Naive thymus-derived CD4-positive, alpha-beta T cell (primary cell): ENCODE measurements at regions of chr16 and their contacts with region 1.

Region 1: DNA sequence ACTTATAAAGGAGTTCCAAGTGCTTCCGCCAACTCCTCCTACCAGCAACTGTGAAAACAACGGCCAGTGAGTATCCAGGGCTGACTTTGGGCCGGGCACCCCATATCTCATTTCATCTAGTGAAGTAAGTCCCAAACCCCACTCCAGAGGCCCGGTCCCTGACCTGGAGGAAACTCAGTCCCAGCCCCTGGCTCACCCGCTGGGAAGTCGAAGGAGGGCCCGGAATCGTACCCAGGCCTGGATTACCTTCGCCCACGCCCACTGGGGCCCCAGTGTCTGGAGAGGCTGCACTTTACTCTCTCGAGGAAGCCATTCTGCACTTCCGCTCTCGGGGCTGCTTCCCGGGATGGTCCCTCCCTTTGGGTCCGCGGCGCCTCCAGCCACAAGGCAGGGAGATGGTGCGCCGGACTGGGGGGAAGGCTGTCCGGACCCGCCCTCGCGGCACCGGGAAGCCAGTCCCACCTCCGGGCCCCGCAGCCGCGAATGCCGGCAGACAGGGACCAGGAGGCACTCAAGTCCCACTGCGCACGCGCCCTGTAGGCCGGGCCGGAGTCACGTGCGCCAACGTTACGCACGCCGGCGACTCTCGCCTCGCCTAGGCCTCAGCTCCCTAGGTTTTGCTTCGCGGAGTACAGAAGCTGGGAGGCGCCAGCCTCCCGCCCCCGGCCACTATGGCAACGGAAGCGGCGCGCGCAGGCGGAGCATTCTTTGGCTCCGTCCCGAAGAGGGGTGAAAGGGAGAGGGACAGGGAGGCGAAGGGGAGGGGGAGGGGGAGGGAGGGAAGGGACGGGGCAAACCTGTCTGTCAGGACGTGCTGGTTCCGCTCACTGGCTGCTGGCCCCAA is at the start of gene CMTR2:
- DNase-seq: peak; percentile 77 to 92 (median 87)
- ATAC-seq: peak; percentile 97
- H3K4me3 ChIP-seq: peak within 1 kb of the TSS; percentile 87
- H3K4me3 Mint-ChIP-seq: peak within 1 kb of the TSS; percentile 81 to 93 (median 89)
- H3K27ac ChIP-seq: peak within 1 kb of the TSS; percentile 82
- H3K27ac Mint-ChIP-seq: peak within 1 kb of the TSS; percentile 75 to 95 (median 92)
- H3K4me1 ChIP-seq: peaks cover 5 to 14% of the 10 kb centered on the region in 2 donors
- H3K4me1 Mint-ChIP-seq: peaks cover 21 to 36% (median 30%) of the 10 kb centered on the region in 7 donors
- H3K27me3 ChIP-seq: no peaks in the 10 kb centered on the region
- H3K27me3 Mint-ChIP-seq: peaks cover 13 to 26% (median 19%) of the 10 kb centered on the region in 5 donors
- total RNA-seq, gene CMTR2: 8.0 to 28.2 (median 22.3) TPM

Region 2: GRCh38 chr16:70430667-70431536 is 858.2 kb before region 1 on chr16:
- CTCF ChIA-PET with region 1: no interaction called
- POLR2A ChIA-PET with region 1: no interaction called
- intact Hi-C with region 1: loop called in 1 of 2 experiments (anchors 5 kb)
- DNase-seq: peak in 8 of 9 donors; percentile 49 to 85 (median 64)
- ATAC-seq: peak; percentile 89
- H3K4me3 ChIP-seq: peak overlapping the region; percentile 29
- H3K4me3 Mint-ChIP-seq: peak overlapping the region; percentile 60 to 86 (median 78)
- H3K27ac ChIP-seq: peak overlapping the region; percentile 91
- H3K27ac Mint-ChIP-seq: peak overlapping the region; percentile 84 to 98 (median 93)
- H3K4me1 ChIP-seq: peaks cover 20 to 32% of the 10 kb centered on the region in 2 donors
- H3K4me1 Mint-ChIP-seq: peaks cover 47 to 78% (median 70%) of the 10 kb centered on the region in 7 donors
- H3K27me3 ChIP-seq: no peaks in the 10 kb centered on the region
- H3K27me3 Mint-ChIP-seq: no peaks in the 10 kb centered on the region

Region 3: GRCh38 chr16:70800781-70801530 is 488.2 kb before region 1 on chr16 and contains the start of gene VAC14:
- CTCF ChIA-PET with region 1: no interaction called
- POLR2A ChIA-PET with region 1: no interaction called
- intact Hi-C with region 1: loop called (anchors 1 kb)
- DNase-seq: peak; percentile 96 to 99 (median 97)
- ATAC-seq: peak; percentile 99
- H3K4me3 ChIP-seq: peak within 1 kb of the TSS; percentile 90
- H3K4me3 Mint-ChIP-seq: peak within 1 kb of the TSS; percentile 90 to 98 (median 94)
- H3K27ac ChIP-seq: peak within 1 kb of the TSS; percentile 78
- H3K27ac Mint-ChIP-seq: peak within 1 kb of the TSS; percentile 84 to 95 (median 92)
- H3K4me1 ChIP-seq: peaks cover 11 to 17% of the 10 kb centered on the region in 2 donors
- H3K4me1 Mint-ChIP-seq: peaks cover 19 to 49% (median 44%) of the 10 kb centered on the region in 7 donors
- H3K27me3 ChIP-seq: no peaks in the 10 kb centered on the region
- H3K27me3 Mint-ChIP-seq: peaks cover 0 to 15% (median 0%) of the 10 kb centered on the region in 5 donors
- total RNA-seq, gene VAC14: 36.7 to 47.1 (median 45.9) TPM

Region 4: GRCh38 chr16:71461686-71462648 is 172.9 kb after region 1 on chr16 and contains the start of gene ZNF23:
- CTCF ChIA-PET with region 1: no interaction called
- POLR2A ChIA-PET with region 1: no interaction called
- intact Hi-C with region 1: loop called (anchors 5 kb)
- DNase-seq: peak; percentile 53 to 84 (median 72)
- ATAC-seq: peak; percentile 99
- H3K4me3 ChIP-seq: peak within 1 kb of the TSS; percentile 92
- H3K4me3 Mint-ChIP-seq: peak within 1 kb of the TSS; percentile 88 to 97 (median 94)
- H3K27ac ChIP-seq: peak within 1 kb of the TSS; percentile 87
- H3K27ac Mint-ChIP-seq: peak within 1 kb of the TSS; percentile 85 to 98 (median 92)
- H3K4me1 ChIP-seq: peaks cover 4 to 6% of the 10 kb centered on the region in 2 donors
- H3K4me1 Mint-ChIP-seq: peaks cover 13 to 39% (median 27%) of the 10 kb centered on the region in 7 donors
- H3K27me3 ChIP-seq: no peaks in the 10 kb centered on the region
- H3K27me3 Mint-ChIP-seq: no peaks in the 10 kb centered on the region
- total RNA-seq, gene ZNF23: 6.5 to 16.0 (median 8.8) TPM

Region 5: DNA sequence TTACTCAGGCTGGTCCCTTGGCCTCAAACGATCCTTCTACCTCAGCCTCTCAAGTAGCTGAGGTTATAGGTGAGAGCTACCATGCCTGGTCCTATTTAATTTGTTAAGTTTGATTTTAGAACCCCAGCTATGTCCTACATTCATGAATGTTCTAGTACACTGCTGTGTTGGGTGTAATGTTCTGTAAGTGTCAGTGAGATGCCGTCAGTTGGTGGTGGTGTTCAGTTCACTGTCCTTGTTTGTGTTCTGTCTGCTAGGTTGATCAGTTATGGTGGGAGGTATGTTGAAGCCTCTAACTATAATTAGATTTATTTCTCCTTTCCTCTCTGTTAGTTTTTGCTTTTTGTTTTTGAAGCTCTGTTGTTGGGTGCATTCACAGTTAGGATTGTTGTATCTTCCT is 614.5 kb after region 1 on chr16:
- CTCF ChIA-PET with region 1: no interaction called
- POLR2A ChIA-PET with region 1: no interaction called
- intact Hi-C with region 1: loop called in 1 of 2 experiments (anchors 5 kb)
- DNase-seq: no peak
- ATAC-seq: no peak
- H3K4me3 ChIP-seq: no peak overlapping the region
- H3K4me3 Mint-ChIP-seq: peak overlapping the region in 8 of 10 donors; percentile 12 to 76 (median 50)
- H3K27ac ChIP-seq: no peak overlapping the region
- H3K27ac Mint-ChIP-seq: peak overlapping the region in 8 of 9 donors; percentile 22 to 79 (median 70)
- H3K4me1 ChIP-seq: peaks cover 43 to 48% of the 10 kb centered on the region in 2 donors
- H3K4me1 Mint-ChIP-seq: peaks cover 57 to 96% (median 73%) of the 10 kb centered on the region in 7 donors
- H3K27me3 ChIP-seq: no peaks in the 10 kb centered on the region
- H3K27me3 Mint-ChIP-seq: no peaks in the 10 kb centered on the region

Region 6: GRCh38 chr16:72093448-72094265 is 804.5 kb after region 1 on chr16 and contains the starts of genes DHX38 and TXNL4B:
- CTCF ChIA-PET with region 1: no interaction called
- POLR2A ChIA-PET with region 1: no interaction called
- intact Hi-C with region 1: loop called in 1 of 2 experiments (anchors 2 kb)
- DNase-seq: peak; percentile 70 to 95 (median 92)
- ATAC-seq: peak; percentile 98
- H3K4me3 ChIP-seq: peak within 1 kb of the TSS; percentile 86
- H3K4me3 Mint-ChIP-seq: peak within 1 kb of the TSS; percentile 94 to 100 (median 98)
- H3K27ac ChIP-seq: peak within 1 kb of the TSS; percentile 93
- H3K27ac Mint-ChIP-seq: peak within 1 kb of the TSS; percentile 92 to 100 (median 99)
- H3K4me1 ChIP-seq: peaks cover 21 to 24% of the 10 kb centered on the region in 2 donors
- H3K4me1 Mint-ChIP-seq: peaks cover 33 to 70% (median 63%) of the 10 kb centered on the region in 7 donors
- H3K27me3 ChIP-seq: no peaks in the 10 kb centered on the region
- H3K27me3 Mint-ChIP-seq: no peaks in the 10 kb centered on the region
- total RNA-seq, gene DHX38: 90.1 to 113 (median 104) TPM
- total RNA-seq, gene TXNL4B: 12.5 to 20.9 (median 18.5) TPM